K562 (cell line): ENCODE measurements at regions of chr6 and their contacts with region 1.

Region 1: DNA sequence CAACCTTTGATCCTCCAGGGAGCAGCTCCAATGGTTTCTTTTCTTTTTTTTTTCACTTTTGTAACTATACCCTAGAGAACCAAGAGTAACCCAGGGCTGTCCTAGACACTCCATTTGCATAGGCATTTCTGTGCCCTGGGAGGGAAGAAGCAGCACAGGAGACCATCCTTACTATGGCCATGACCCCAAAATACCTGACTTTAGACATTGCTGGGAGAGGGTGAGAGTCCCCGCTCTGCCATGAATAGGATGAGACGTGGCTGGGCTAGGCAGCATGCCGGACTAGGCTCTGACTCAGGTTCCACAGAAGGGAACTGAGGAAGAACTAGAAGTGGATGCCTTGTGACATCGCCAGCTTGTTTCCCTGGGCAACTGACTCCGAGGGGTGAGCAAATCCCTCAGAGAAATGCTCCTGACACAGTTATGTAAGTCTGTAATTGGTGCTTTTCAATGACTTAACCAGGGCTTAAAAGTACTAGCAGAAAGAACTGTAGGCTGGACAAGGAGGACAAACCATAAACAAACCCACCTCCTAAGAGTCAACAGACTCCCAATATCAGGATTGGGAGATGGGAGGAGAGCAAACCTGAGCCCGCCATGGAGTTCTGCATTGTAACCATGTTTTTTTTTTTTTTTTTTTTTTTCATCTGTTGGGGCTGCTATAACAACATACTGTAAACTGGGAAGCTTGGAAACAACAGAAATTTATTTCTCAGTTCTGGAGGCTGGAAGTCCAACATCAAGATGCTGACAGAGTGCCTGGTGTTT is 910 bp upstream of the ADTRP start:
- DNase-seq: no peak
- ATAC-seq: peak; percentile 38
- H3K4me3 ChIP-seq: no peak overlapping the region
- H3K27ac ChIP-seq: peak overlapping the region; percentile 72; the same call in 1 of the 3 replicates
- H3K4me1 ChIP-seq: peaks cover 7 to 28% of the 10 kb centered on the region in 2 experiments
- H3K27me3 ChIP-seq: no peaks in the 10 kb centered on the region
- CTCF ChIP-seq: no peak
- EP300 ChIP-seq: no peak
- POLR2A ChIP-seq: no peak
- RAD21 ChIP-seq: no peak

Region 2: GRCh38 chr6:11353921-11354389 is 425.6 kb before region 1 on chr6:
- CTCF ChIA-PET with region 1: no interaction called
- POLR2A ChIA-PET with region 1: no interaction called
- in situ Hi-C with region 1: no loop called
- intact Hi-C with region 1: no loop called
- DNase-seq: peak in 1 of 4 experiments; percentile 4
- ATAC-seq: no peak
- H3K4me3 ChIP-seq: no peak overlapping the region
- H3K27ac ChIP-seq: no peak overlapping the region
- H3K4me1 ChIP-seq: no peaks in the 10 kb centered on the region
- H3K27me3 ChIP-seq: peaks cover 7 to 37% of the 10 kb centered on the region in 2 experiments; a peak in 4 of 5 replicates
- CTCF ChIP-seq: no peak
- EP300 ChIP-seq: no peak
- POLR2A ChIP-seq: no peak
- RAD21 ChIP-seq: no peak

Region 3: GRCh38 chr6:11685152-11686093 is 94.1 kb before region 1 on chr6:
- CTCF ChIA-PET with region 1: no interaction called
- POLR2A ChIA-PET with region 1: no interaction called
- in situ Hi-C with region 1: no loop called
- intact Hi-C with region 1: no loop called
- DNase-seq: no peak
- ATAC-seq: no peak
- H3K4me3 ChIP-seq: no peak overlapping the region
- H3K27ac ChIP-seq: no peak overlapping the region
- H3K4me1 ChIP-seq: no peaks in the 10 kb centered on the region; a peak in 1 of 5 replicates
- H3K27me3 ChIP-seq: no peaks in the 10 kb centered on the region
- CTCF ChIP-seq: no peak
- EP300 ChIP-seq: no peak
- POLR2A ChIP-seq: no peak
- RAD21 ChIP-seq: no peak

Region 4: GRCh38 chr6:11921017-11921438 is 141.5 kb after region 1 on chr6:
- CTCF ChIA-PET with region 1: no interaction called
- POLR2A ChIA-PET with region 1: no interaction called
- in situ Hi-C with region 1: no loop called
- intact Hi-C with region 1: loop called (anchors 2 kb)
- DNase-seq: peak; percentile 50 to 94 (median 74)
- ATAC-seq: peak; percentile 93
- H3K4me3 ChIP-seq: no peak overlapping the region
- H3K27ac ChIP-seq: peak overlapping the region; percentile 68
- H3K4me1 ChIP-seq: peaks cover 31 to 54% of the 10 kb centered on the region in 2 experiments
- H3K27me3 ChIP-seq: no peaks in the 10 kb centered on the region
- CTCF ChIP-seq: no peak
- EP300 ChIP-seq: no peak; the same call in 1 of the 2 replicates
- POLR2A ChIP-seq: peak; percentile 64
- RAD21 ChIP-seq: no peak; a peak in 1 of 4 replicates

Region 5: DNA sequence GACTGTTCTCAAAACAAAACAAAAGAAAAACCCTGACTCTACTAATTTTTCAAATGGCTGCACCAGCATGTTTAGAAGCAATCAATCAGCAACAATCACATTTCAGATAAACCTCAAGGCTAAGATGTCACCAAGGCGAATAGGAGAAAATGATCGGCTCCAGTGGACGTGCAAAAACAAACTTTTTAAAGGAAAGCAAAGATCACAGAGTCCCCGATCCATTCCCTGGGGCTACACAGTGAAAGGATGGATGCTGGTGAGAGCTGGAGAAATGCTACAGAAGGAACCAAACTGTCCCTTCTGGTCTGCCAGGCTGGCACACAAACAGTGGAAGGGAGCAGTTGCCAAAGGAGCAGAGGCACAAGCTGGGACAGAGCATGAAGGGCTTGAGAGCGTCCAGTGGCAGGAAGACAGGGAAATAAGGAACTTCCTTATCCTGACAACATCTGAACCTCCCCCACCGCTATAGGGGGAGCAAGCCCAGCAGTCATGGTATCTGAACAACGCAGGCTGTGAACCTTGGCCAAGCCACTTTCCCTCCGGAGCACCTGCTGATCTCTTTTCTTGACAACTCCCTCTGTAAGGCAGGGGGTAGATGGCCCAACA is 158.9 kb after region 1 on chr6:
- CTCF ChIA-PET with region 1: no interaction called
- POLR2A ChIA-PET with region 1: no interaction called
- in situ Hi-C with region 1: no loop called
- intact Hi-C with region 1: loop called (anchors 5 kb)
- DNase-seq: peak; percentile 90 to 99 (median 92)
- ATAC-seq: peak; percentile 93
- H3K4me3 ChIP-seq: peak overlapping the region; percentile 23; the same call in 1 of the 2 replicates
- H3K27ac ChIP-seq: peak overlapping the region; percentile 79
- H3K4me1 ChIP-seq: peaks cover 12 to 28% of the 10 kb centered on the region in 2 experiments; a peak in 4 of 5 replicates
- H3K27me3 ChIP-seq: no peaks in the 10 kb centered on the region
- CTCF ChIP-seq: 0 out of 6 replicates have a peak, but pooled peaks of 1 of the 3 experiments have one; percentile 1
- EP300 ChIP-seq: peak; percentile 99
- POLR2A ChIP-seq: peak; percentile 56; the same call in 1 of the 2 replicates
- RAD21 ChIP-seq: peak; percentile 49 to 67